ENCODE measurements at regions of chr3 and their contacts with region 1.

Region 1: GRCh38 chr3:49939858-49940666 is at the start of gene RBM6:
- DNase-seq: peak; percentile 93
- ATAC-seq: peak; percentile 99
- H3K4me3 Mint-ChIP-seq: peak within 1 kb of the TSS; percentile 99
- H3K27ac Mint-ChIP-seq: peak within 1 kb of the TSS; percentile 99
- H3K4me1 Mint-ChIP-seq: peaks cover 11% of the 10 kb centered on the region
- H3K27me3 Mint-ChIP-seq: no peaks in the 10 kb centered on the region
- total RNA-seq, gene RBM6: 147 TPM

Region 2: DNA sequence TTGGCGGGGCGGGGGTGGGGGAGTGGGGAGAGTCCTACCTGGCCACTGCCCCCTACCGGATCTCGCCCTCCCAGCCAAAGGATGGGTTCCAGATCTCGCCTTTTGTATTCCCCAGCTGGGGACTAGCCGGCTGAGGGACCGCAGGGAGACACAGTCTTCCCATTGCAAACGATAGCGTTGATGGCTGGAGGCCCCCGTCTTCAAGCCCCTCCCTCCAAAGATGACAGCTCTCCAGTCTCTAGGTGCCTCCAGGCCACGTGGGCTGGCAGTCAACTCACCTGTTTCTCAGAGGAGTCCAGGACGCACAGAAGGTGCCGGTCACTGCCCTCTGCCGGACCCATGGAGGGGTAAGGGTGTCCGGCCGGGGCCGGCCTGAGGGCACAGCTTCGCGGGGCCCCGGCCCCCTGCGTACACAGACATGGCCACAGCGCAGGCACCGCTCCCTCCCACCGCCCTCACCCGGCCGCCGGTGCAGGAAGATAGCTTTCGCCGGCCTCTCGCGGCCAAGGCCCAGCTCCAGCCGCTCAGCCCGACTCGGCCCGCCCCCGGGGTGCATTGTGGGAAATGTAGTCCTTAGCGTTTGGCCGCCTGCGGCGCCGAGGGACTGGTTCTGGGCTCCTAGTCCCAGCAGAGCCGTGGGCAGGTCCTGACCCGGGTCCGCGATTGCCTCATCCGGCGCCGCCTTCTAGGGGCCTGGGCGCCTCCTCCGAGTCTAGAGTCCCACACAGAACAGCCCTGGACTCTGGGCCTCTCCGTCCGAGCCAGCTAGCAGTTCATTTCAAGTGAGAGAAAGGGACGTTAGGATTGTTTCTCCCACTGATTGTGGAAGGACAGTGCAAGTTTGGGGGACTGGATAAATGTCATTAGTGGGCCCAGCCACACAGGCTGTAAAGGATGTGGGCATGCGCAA is 10.5 kb before region 1 on chr3 and contains the start of gene MON1A:
- POLR2A ChIA-PET with region 1: interaction called, 55 read pairs
- DNase-seq: peak; percentile 90
- ATAC-seq: peak; percentile 96
- H3K4me3 Mint-ChIP-seq: peak within 1 kb of the TSS; percentile 89
- H3K27ac Mint-ChIP-seq: peak within 1 kb of the TSS; percentile 77
- H3K4me1 Mint-ChIP-seq: peaks cover 25% of the 10 kb centered on the region
- H3K27me3 Mint-ChIP-seq: no peaks in the 10 kb centered on the region
- total RNA-seq, gene MON1A: 11.9 to 12.9 TPM

Region 3: DNA sequence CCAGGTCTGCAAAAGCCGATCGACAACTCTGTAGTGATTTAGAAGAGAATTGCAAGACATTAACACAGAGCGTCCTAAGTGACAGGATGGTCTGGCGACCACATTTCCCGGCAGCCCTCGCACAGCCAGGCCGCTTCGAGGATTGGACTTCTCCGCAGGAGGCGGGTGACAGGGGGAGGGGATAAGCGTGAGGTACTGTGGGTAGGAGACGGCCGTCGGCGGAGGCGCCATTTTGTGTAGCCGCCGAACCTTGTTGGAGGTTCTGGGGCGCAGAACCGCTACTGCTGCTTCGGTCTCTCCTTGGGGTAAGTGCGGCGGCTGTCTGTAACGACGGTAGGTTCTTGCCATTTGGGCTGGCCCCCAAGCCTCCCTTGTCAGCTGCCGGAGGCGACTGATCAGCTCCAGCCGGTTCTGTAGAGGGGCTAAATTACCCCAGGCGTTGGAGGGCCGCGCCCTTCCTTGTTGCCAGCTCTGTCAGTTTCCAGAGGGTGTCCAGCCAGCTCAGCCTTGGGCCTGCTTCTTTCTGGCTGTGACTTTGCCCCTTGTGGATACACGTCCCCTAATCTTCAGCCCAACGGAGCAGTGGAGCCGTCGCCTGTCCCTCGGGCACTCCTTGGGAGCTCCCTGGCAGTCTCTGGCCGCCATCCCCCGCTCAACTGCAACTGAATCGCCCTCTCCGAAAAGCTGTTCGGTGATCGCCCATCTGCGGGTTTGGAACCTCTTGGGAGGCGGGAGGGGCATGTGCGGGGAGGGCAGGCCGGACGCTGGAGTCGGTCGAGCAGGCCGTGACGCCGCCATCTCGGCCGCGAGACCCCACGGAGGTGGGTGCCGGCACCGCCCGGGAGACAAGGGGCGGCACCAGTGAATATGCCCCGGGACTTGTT is 148.9 kb after region 1 on chr3 and contains the start of gene RBM5:
- POLR2A ChIA-PET with region 1: interaction called, 10 read pairs
- DNase-seq: peak; percentile 89
- ATAC-seq: peak; percentile 99
- H3K4me3 Mint-ChIP-seq: peak within 1 kb of the TSS; percentile 95
- H3K27ac Mint-ChIP-seq: peak within 1 kb of the TSS; percentile 95
- H3K4me1 Mint-ChIP-seq: peaks cover 24% of the 10 kb centered on the region
- H3K27me3 Mint-ChIP-seq: no peaks in the 10 kb centered on the region
- total RNA-seq, gene RBM5: 256 to 257 TPM